Mammary epithelial cell (primary cell): ENCODE measurements at regions of chr20 and their contacts with region 1.

Region 1: DNA sequence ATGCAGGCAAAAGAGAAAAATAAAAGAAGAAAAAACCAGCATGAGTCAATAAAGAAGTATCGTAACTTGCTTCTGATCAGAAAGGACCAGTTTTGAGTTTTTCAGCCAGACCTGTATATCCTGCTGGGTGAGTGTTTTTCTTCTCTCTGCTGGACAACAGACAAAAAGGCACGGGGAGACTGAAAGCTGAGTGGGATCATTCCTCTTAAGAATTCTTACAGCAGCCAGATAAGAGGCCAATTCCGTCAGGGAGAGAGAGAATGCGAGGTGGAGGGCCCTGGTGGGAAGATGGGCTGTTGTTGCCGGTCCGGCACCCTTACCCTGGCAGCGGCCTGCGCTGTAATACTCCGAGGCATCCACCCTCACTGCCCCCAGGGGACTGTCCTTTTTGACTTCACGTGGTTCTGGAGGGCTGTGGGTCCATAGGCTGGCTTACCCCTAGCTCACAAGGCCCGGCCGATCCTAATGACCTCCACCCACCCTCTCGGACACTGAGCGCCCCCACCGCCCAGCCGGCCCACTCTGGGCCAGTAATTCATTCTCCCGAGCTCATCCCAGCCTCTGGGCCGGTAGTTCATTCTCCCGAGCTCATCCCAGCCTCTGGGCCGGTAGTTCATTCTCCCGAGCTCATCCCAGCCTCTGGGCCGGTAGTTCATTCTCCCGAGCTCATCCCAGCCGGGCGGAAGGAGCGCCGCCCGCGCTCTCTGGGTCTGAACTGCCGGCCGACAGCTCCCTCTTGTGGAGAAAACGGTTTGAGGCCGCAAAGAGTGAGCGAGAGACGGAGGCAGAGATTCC is 118.3 kb upstream of the SIRPA start:
- DNase-seq: peak; percentile 80
- H3K4me3 ChIP-seq: peak overlapping the region; percentile 48 to 63 (median 57)
- H3K27ac ChIP-seq: peak overlapping the region; percentile 37
- H3K4me1 ChIP-seq: peaks cover 14% of the 10 kb centered on the region
- H3K27me3 ChIP-seq: no peaks in the 10 kb centered on the region
- CTCF ChIP-seq: peak; percentile 62 to 87

Region 2: DNA sequence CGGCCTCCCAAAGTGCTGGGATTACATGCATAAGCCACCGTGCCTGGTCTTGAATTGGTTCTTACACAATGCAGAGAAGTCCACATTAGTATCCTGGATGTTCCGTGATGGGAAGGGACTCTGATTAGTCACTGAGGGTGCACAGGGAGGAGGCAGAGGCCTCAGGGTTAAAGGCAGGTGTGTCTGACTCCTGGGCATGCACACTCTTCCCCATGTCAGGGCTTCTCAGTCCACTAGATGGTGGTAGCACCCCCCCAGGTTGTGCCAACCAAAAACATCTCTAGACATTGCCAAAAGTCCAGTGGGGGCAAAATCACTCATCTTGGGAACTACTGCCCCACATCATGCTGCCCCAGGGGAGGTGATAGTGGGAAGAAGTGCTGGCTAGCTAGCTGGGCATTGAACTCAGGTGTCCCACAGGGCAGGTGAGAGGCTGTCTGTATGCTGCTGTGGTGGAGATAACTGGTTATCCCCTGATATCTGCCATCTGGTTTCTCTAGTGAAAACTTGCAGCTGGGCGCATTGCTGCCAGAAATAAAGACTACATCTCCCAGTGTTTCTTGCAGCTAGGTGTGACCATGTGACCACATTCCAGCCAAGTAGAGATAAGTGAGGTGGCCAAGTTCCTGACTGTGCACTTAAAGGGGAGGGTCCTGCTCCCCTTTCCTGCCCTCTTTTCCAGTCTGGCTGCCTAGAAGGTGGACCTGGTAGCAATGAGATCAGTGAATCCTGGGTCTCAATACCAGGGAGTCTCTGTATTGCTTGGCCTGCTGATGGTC is 301.9 kb before region 1 on chr20:
- CTCF ChIA-PET with region 1: interaction called, 3 read pairs
- dilution Hi-C with region 1: no loop called
- in situ Hi-C with region 1: no loop called
- intact Hi-C with region 1: loop called (anchors 1 kb)
- DNase-seq: peak; percentile 95
- H3K4me3 ChIP-seq: no peak overlapping the region
- H3K27ac ChIP-seq: peak overlapping the region; percentile 51
- H3K4me1 ChIP-seq: peaks cover 60% of the 10 kb centered on the region
- H3K27me3 ChIP-seq: no peaks in the 10 kb centered on the region
- CTCF ChIP-seq: peak; percentile 75 to 87

Region 3: DNA sequence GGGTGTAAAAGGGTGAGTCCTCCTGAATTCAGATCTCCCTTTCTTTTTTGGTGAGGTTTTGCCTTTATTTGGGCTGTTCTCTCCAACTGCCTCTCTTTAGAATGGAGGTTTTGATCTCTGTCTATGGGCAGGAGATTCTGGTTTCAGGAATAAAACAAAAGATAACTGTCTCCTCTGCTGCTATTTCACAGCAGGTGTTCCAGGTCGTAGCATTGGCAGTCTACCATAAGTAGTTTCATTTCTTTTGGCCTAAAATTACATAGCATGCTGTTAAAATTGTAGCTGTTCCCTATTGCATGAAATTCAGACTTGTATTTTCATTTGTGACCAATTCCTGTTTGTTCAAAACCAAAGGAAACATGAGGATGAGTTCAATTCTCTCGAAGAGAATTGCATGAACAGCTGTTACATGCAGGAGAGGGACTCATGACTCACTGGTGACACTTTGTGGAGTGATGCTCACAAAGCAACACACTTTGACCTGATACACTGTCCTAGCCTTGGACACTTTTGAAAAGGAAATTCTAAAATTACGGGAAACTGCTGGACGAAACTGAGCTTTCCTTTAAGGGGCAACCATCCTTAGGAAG is 42.5 kb before region 1 on chr20:
- CTCF ChIA-PET with region 1: no interaction called
- dilution Hi-C with region 1: loop called (anchors 5 kb)
- in situ Hi-C with region 1: no loop called
- intact Hi-C with region 1: no loop called
- DNase-seq: peak; percentile 36
- H3K4me3 ChIP-seq: no peak overlapping the region
- H3K27ac ChIP-seq: no peak overlapping the region
- H3K4me1 ChIP-seq: no peaks in the 10 kb centered on the region
- H3K27me3 ChIP-seq: no peaks in the 10 kb centered on the region
- CTCF ChIP-seq: peak; percentile 8 to 54